Breast epithelium (tissue), 4 donors: ENCODE measurements at regions of chr5 and their contacts with region 1.

Region 1: DNA sequence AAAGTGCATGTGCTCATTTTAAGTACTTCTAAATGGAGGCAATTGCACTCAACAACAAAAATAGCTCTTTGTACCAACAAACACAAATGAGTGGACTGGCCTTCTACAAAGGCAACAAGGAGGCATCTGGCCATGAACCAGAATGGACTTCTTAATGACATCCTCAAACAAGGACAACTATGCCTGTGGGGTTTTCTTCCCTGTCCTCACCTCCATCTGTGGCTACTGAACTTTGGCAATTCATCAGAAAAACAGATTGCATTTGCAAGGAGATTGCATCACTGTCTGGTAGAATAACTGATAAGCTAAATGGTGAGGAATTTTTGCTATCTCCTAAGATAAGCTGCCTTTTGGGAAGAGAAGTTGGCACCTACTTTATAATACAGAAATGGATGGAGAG is 447.3 kb upstream of the CCNG1 start:
- DNase-seq: no peak
- H3K4me3 ChIP-seq: no peak overlapping the region
- H3K27ac ChIP-seq: no peak overlapping the region
- H3K4me1 ChIP-seq: no peaks in the 10 kb centered on the region
- H3K27me3 ChIP-seq: no peaks in the 10 kb centered on the region
- CTCF ChIP-seq: no peak
- POLR2A ChIP-seq: no peak

Region 2: GRCh38 chr5:162911873-162912272 is 78.2 kb before region 1 on chr5:
- intact Hi-C with region 1: loop called (anchors 2 kb)
- DNase-seq: no peak
- H3K4me3 ChIP-seq: no peak overlapping the region
- H3K27ac ChIP-seq: no peak overlapping the region
- H3K4me1 ChIP-seq: no peaks in the 10 kb centered on the region
- H3K27me3 ChIP-seq: no peaks in the 10 kb centered on the region
- CTCF ChIP-seq: no peak
- POLR2A ChIP-seq: no peak